H1 (cell line): ENCODE measurements at regions of chr5 and their contacts with region 1.

Region 1: GRCh38 chr5:178461004-178461730 is 129.0 kb downstream of the COL23A1 start:
- DNase-seq: peak; percentile 39 to 96
- H3K4me3 ChIP-seq: no peak overlapping the region
- H3K27ac ChIP-seq: no peak overlapping the region
- H3K4me1 ChIP-seq: peaks cover 0 to 13% (median 8%) of the 10 kb centered on the region in 4 experiments; a peak in 5 of 7 replicates
- H3K27me3 ChIP-seq: no peaks in the 10 kb centered on the region
- CTCF ChIP-seq: peak in 2 of 3 experiments; percentile 87 to 97; a peak in 3 of 4 replicates
- EP300 ChIP-seq: no peak
- POLR2A ChIP-seq: no peak
- RAD21 ChIP-seq: peak; percentile 87 to 91

Region 2: DNA sequence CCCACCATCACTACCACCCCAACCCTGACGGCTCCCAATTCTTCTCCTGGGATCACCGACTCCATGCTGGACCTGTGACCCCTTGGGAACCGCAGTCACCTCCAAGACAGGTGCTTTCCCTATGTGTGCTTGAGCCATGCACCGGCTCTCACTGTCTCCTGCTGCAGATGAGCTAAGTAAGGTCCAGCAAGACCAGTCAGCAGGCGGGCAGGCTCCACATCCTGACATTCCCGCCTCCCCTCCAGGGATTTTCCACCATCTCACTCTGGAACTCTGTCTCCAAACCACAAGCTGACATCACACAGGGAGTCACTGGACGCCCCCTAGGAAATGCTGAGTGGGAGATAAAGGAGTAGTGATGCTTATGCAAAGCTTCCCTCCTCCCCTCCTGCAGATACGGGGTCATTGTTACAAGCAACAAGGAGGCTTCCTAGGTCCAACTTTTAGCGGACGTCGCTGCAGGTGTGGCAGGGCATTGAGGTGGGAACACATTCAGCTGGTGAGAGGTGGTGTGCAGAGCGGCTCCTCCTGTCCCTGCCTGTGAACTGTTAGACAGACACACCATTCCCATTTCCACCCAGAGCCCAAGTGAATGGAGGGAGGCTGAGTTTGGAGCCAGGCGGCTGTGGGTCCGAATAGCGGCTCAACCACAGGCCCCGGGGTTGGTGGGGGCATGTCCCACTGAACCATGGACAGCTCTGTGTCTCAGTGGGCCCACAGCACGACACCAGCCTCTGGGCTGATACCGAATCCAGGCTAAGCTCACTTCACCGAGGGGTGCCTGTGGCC is 99.3 kb before region 1 on chr5:
- CTCF ChIA-PET with region 1: interaction called, 12 read pairs
- POLR2A ChIA-PET with region 1: no interaction called
- DNase-seq: no peak
- H3K4me3 ChIP-seq: no peak overlapping the region
- H3K27ac ChIP-seq: no peak overlapping the region
- H3K4me1 ChIP-seq: peaks cover under 1 to 22% (median 8%) of the 10 kb centered on the region in 4 experiments
- H3K27me3 ChIP-seq: no peaks in the 10 kb centered on the region
- CTCF ChIP-seq: no peak
- EP300 ChIP-seq: no peak
- POLR2A ChIP-seq: no peak
- RAD21 ChIP-seq: no peak

Region 3: GRCh38 chr5:178423901-178424809 is 37.0 kb before region 1 on chr5:
- CTCF ChIA-PET with region 1: interaction called, 14 read pairs
- POLR2A ChIA-PET with region 1: interaction called, 4 read pairs
- DNase-seq: peak in 1 of 2 experiments; percentile 38
- H3K4me3 ChIP-seq: no peak overlapping the region
- H3K27ac ChIP-seq: no peak overlapping the region
- H3K4me1 ChIP-seq: peaks cover 16 to 35% (median 21%) of the 10 kb centered on the region in 4 experiments
- H3K27me3 ChIP-seq: no peaks in the 10 kb centered on the region
- CTCF ChIP-seq: no peak
- EP300 ChIP-seq: no peak
- POLR2A ChIP-seq: no peak
- RAD21 ChIP-seq: no peak

Region 4: DNA sequence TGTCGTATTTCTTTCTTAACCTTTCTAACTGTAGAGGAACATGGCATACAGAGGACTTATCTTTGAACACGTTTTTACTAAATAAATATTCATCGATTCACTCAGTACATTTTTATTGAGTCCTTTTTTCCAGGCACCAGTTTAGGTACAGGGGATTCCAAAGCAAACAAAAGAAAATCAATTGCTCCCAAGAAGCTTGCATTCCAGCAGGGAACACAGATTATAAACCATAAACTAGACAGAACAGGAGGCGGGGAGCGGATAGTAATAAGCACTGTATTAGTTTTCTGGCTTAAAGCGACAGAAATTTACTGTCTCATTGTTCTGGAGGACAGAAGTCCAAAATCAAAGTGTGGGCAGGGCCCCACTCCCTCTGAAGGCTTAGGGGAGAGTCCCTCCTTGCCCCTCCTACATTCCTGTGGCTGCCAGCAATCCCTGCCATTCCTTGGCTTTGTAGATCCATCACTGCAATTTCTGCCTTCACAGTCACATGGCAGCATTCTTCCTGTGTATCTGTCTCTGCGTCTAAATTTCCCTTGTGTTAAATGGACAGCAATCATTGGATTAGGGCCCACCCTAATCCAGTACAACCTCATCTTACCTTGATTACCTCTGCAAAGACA is 13.5 kb after region 1 on chr5:
- CTCF ChIA-PET with region 1: interaction called, 80 read pairs
- POLR2A ChIA-PET with region 1: interaction called, 6 read pairs
- DNase-seq: no peak
- H3K4me3 ChIP-seq: no peak overlapping the region
- H3K27ac ChIP-seq: no peak overlapping the region
- H3K4me1 ChIP-seq: no peaks in the 10 kb centered on the region; a peak in 1 of 7 replicates
- H3K27me3 ChIP-seq: no peaks in the 10 kb centered on the region
- CTCF ChIP-seq: no peak
- EP300 ChIP-seq: no peak
- POLR2A ChIP-seq: no peak
- RAD21 ChIP-seq: no peak

Region 5: DNA sequence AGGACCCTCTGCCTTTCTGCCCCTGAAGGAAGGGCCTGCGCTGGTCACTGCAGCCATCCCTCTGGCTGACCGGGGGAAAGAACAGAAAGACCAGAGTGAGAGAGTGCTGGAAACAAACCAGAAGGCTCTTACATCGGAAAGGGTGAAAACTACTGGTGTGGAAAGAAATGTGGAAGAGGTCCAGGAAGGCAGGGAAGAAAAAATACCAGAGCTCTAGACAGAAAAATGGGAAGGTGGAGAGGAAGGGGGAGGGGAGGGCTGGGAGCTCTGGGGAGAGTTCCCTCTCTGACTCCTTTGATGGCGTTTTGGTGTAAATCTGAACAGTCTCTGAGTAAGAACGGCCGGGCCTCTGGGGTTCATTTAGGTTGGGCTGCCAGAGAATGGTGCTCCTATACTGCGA is 81.3 kb after region 1 on chr5:
- CTCF ChIA-PET with region 1: interaction called, 16 read pairs
- POLR2A ChIA-PET with region 1: no interaction called
- DNase-seq: no peak
- H3K4me3 ChIP-seq: no peak overlapping the region
- H3K27ac ChIP-seq: no peak overlapping the region
- H3K4me1 ChIP-seq: peaks cover 0 to 11% (median 5%) of the 10 kb centered on the region in 4 experiments; a peak in 5 of 7 replicates
- H3K27me3 ChIP-seq: no peaks in the 10 kb centered on the region
- CTCF ChIP-seq: no peak
- EP300 ChIP-seq: no peak
- POLR2A ChIP-seq: no peak
- RAD21 ChIP-seq: no peak

Region 6: GRCh38 chr5:178590141-178590923 is 129.2 kb after region 1 on chr5 and contains the start of gene COL23A1:
- CTCF ChIA-PET with region 1: interaction called, 28 read pairs
- POLR2A ChIA-PET with region 1: no interaction called
- DNase-seq: peak in 1 of 2 experiments; percentile 83
- H3K4me3 ChIP-seq: peak within 1 kb of the TSS; percentile 32 to 68 (median 57)
- H3K27ac ChIP-seq: no peak within 1 kb of the TSS
- H3K4me1 ChIP-seq: peaks cover 5 to 8% (median 7%) of the 10 kb centered on the region in 4 experiments
- H3K27me3 ChIP-seq: peaks cover 13 to 28% (median 22%) of the 10 kb centered on the region in 4 experiments
- CTCF ChIP-seq: peak in 2 of 3 experiments; percentile 88 to 93; a peak in 3 of 4 replicates
- EP300 ChIP-seq: no peak
- POLR2A ChIP-seq: no peak
- RAD21 ChIP-seq: peak; percentile 90 to 94
- total RNA-seq, gene COL23A1: 4.7 and 5.9 TPM in 2 replicates

Region 7: DNA sequence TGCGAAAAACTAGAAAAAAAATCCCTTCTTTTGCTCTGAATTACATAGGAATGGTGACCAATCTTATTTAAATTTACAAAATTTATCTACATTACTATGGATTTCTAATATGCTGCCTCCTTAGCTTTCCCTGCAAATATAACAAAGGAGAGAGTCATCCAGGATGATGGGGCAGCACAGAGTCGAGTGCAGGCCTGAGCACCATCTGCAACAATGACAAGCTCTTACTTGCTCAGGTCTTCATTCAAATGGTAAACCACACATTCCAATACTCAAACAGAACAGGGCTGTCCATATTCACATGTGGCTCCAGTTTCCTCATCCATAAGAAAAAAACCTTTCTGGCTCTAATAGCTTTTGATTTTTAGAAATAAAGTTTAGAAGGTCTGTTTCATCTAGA is 365.0 kb after region 1 on chr5:
- CTCF ChIA-PET with region 1: no interaction called
- POLR2A ChIA-PET with region 1: no interaction called
- DNase-seq: no peak
- H3K4me3 ChIP-seq: no peak overlapping the region
- H3K27ac ChIP-seq: no peak overlapping the region
- H3K4me1 ChIP-seq: no peaks in the 10 kb centered on the region
- H3K27me3 ChIP-seq: no peaks in the 10 kb centered on the region
- CTCF ChIP-seq: no peak
- EP300 ChIP-seq: no peak
- POLR2A ChIP-seq: no peak
- RAD21 ChIP-seq: no peak